Left ventricle myocardium inferior (tissue), 1 donor: ENCODE measurements at regions of chr5 and their contacts with region 1.

Region 1: DNA sequence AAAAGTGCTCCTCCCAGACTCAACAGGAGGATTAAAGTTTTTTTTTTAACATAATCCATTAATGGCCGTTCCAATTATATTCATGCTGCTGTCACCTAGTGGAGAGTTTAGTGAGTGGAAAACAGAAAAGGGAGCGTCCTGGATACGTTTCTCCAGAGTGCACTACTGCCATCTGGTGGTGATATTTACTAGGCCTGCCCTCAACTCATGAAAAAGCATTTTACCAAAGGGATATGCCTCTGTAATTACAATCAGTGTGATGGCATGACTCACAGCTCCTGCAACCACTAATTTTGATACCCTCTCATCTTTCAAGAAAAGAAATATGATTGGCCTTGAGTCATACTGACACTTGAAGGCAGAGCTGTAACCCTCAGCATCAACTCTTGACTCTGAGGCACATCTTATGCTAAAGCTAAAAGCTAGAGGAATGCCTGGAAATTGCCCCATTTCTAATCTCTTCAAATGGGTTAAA is 20.0 kb downstream of the MINAR2 start:
- DNase-seq: peak; percentile 15
- H3K4me3 ChIP-seq: no peak overlapping the region
- H3K27ac ChIP-seq: no peak overlapping the region
- H3K4me1 ChIP-seq: no peaks in the 10 kb centered on the region
- H3K27me3 ChIP-seq: no peaks in the 10 kb centered on the region
- CTCF ChIP-seq: peak; percentile 98

Region 2: DNA sequence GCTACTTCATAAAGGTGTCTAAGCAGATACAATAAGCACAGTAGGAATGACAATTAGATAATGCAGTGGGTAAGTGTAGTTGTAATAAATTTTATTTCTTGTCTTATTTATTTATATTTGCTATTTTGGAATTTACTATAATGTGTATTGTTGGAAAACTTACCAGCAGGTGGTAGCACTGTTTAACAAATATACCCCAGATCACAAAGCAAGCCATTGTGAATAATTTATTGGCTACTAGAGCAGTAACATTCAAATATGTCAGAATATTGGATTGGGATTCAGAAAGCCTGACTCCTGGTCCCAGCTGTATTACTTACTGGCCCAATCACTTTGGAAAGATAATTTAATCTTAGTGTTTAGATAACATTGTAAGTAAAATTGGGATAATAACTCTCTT is 595.4 kb before region 1 on chr5:
- intact Hi-C with region 1: loop called (anchors 10 kb)
- DNase-seq: no peak
- H3K4me3 ChIP-seq: no peak overlapping the region
- H3K27ac ChIP-seq: no peak overlapping the region
- H3K4me1 ChIP-seq: no peaks in the 10 kb centered on the region
- H3K27me3 ChIP-seq: no peaks in the 10 kb centered on the region
- CTCF ChIP-seq: peak; percentile 40

Region 3: GRCh38 chr5:129422946-129423345 is 345.0 kb before region 1 on chr5:
- intact Hi-C with region 1: no loop called
- DNase-seq: no peak
- H3K4me3 ChIP-seq: no peak overlapping the region
- H3K27ac ChIP-seq: no peak overlapping the region
- H3K4me1 ChIP-seq: no peaks in the 10 kb centered on the region
- H3K27me3 ChIP-seq: no peaks in the 10 kb centered on the region
- CTCF ChIP-seq: no peak

Region 4: GRCh38 chr5:129884322-129884721 is 116.4 kb after region 1 on chr5:
- intact Hi-C with region 1: no loop called
- DNase-seq: no peak
- H3K4me3 ChIP-seq: no peak overlapping the region
- H3K27ac ChIP-seq: no peak overlapping the region
- H3K4me1 ChIP-seq: no peaks in the 10 kb centered on the region
- H3K27me3 ChIP-seq: no peaks in the 10 kb centered on the region
- CTCF ChIP-seq: no peak